Activated naive CD4-positive, alpha-beta T cell treated with anti-CD3 and anti-CD28 coated beads, Interleukin-2, amount 10 ng/mL, durations not matched to agents 7 days and 5 days (primary cell): ENCODE measurements at regions of chr2 and their contacts with region 1.

Region 1: DNA sequence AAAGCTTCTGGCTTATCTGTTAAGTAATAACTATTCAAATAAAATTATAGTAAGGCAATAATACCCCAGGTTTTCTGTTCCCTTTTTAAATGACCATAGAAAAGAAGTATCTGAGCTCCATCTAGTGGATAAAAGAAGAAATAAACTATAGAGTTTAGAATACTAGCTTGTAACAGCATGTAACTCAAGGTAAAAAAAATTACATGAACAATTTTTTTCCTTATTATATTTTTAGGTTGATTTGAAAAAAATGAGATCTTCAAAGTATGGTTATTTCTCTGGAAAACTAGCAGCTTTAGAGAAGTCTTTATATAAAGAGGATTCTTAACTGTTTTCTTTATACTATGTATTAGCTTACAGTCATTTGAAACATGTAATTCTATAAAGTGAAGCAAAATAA is 58.1 kb downstream of the NCKAP1 start:
- DNase-seq: no peak
- H3K4me3 Mint-ChIP-seq: no peak overlapping the region
- H3K27ac Mint-ChIP-seq: no peak overlapping the region
- H3K4me1 Mint-ChIP-seq: no peaks in the 10 kb centered on the region
- H3K27me3 Mint-ChIP-seq: no peaks in the 10 kb centered on the region

Region 2: GRCh38 chr2:182666674-182667314 is 313.3 kb before region 1 on chr2:
- CTCF ChIA-PET with region 1: interaction called, 45 read pairs
- DNase-seq: no peak
- H3K4me3 Mint-ChIP-seq: no peak overlapping the region
- H3K27ac Mint-ChIP-seq: no peak overlapping the region
- H3K4me1 Mint-ChIP-seq: no peaks in the 10 kb centered on the region
- H3K27me3 Mint-ChIP-seq: peaks cover 9% of the 10 kb centered on the region

Region 3: DNA sequence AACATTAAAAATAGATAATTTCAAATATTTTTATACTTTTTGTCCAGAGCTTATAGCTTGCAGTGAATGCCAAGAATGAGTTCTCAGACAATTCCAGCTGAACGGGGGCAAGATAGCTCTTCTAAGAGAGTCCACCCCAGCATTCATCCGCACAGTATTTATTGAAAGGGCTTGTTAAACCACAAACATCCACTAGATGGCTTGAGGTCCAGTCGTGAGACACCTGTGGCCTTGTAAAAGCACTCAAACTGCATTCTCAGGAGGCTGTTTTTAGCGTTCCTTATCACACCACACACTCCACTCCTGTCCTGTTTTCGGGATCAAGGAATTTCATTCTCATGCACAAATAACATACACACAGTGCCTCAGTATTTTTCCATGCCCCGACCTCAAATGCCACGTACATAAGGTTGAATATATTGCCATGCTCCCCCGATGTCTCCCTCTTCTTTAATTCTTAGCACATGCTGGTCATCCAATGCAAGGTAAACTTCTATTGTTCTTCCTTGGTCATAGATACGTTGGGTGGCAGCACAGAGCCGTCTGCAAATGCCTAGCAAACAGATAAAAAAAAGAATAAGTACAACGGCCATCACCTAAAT is 216.7 kb before region 1 on chr2:
- CTCF ChIA-PET with region 1: interaction called, 20 read pairs
- DNase-seq: no peak
- H3K4me3 Mint-ChIP-seq: no peak overlapping the region
- H3K27ac Mint-ChIP-seq: no peak overlapping the region
- H3K4me1 Mint-ChIP-seq: no peaks in the 10 kb centered on the region
- H3K27me3 Mint-ChIP-seq: no peaks in the 10 kb centered on the region

Region 4: GRCh38 chr2:182784777-182785176 is 195.3 kb before region 1 on chr2:
- CTCF ChIA-PET with region 1: interaction called, 20 read pairs
- DNase-seq: no peak
- H3K4me3 Mint-ChIP-seq: no peak overlapping the region
- H3K27ac Mint-ChIP-seq: no peak overlapping the region
- H3K4me1 Mint-ChIP-seq: no peaks in the 10 kb centered on the region
- H3K27me3 Mint-ChIP-seq: no peaks in the 10 kb centered on the region